Thyroid gland (tissue), 4 donors: ENCODE measurements at regions of chr13 and their contacts with region 1.

Region 1: GRCh38 chr13:74133657-74134201 is 475 bp downstream of the KLF12 start:
- DNase-seq: peak; percentile 66 to 72
- H3K4me3 ChIP-seq: peak overlapping the region; percentile 26 to 78 (median 71)
- H3K27ac ChIP-seq: peak overlapping the region; percentile 57 to 71 (median 67)
- H3K4me1 ChIP-seq: peaks cover 9 to 11% of the 10 kb centered on the region in 2 donors
- H3K27me3 ChIP-seq: no peaks in the 10 kb centered on the region
- CTCF ChIP-seq: no peak
- POLR2A ChIP-seq: peak in 1 of 2 donors; percentile 19

Region 2: GRCh38 chr13:73765651-73766384 is 367.9 kb before region 1 on chr13:
- intact Hi-C with region 1: loop called (anchors 10 kb)
- DNase-seq: peak; percentile 92 to 95
- H3K4me3 ChIP-seq: no peak overlapping the region
- H3K27ac ChIP-seq: peak overlapping the region; percentile 10 to 51 (median 21)
- H3K4me1 ChIP-seq: peaks cover 10 to 11% of the 10 kb centered on the region in 2 donors
- H3K27me3 ChIP-seq: no peaks in the 10 kb centered on the region
- CTCF ChIP-seq: no peak
- POLR2A ChIP-seq: no peak

Region 3: GRCh38 chr13:73849292-73849691 is 284.4 kb before region 1 on chr13:
- intact Hi-C with region 1: no loop called
- DNase-seq: no peak
- H3K4me3 ChIP-seq: no peak overlapping the region
- H3K27ac ChIP-seq: no peak overlapping the region
- H3K4me1 ChIP-seq: no peaks in the 10 kb centered on the region
- H3K27me3 ChIP-seq: no peaks in the 10 kb centered on the region
- CTCF ChIP-seq: peak in 1 of 6 experiments; percentile 12
- POLR2A ChIP-seq: no peak

Region 4: GRCh38 chr13:74040200-74040599 is 93.5 kb before region 1 on chr13:
- intact Hi-C with region 1: no loop called
- DNase-seq: peak; percentile 32 to 38
- H3K4me3 ChIP-seq: no peak overlapping the region
- H3K27ac ChIP-seq: no peak overlapping the region
- H3K4me1 ChIP-seq: no peaks in the 10 kb centered on the region
- H3K27me3 ChIP-seq: no peaks in the 10 kb centered on the region
- CTCF ChIP-seq: peak in 3 of 6 experiments; percentile 29 to 62 (median 35)
- POLR2A ChIP-seq: no peak